ENCODE measurements at regions of chr9 and their contacts with region 1.

Region 1: DNA sequence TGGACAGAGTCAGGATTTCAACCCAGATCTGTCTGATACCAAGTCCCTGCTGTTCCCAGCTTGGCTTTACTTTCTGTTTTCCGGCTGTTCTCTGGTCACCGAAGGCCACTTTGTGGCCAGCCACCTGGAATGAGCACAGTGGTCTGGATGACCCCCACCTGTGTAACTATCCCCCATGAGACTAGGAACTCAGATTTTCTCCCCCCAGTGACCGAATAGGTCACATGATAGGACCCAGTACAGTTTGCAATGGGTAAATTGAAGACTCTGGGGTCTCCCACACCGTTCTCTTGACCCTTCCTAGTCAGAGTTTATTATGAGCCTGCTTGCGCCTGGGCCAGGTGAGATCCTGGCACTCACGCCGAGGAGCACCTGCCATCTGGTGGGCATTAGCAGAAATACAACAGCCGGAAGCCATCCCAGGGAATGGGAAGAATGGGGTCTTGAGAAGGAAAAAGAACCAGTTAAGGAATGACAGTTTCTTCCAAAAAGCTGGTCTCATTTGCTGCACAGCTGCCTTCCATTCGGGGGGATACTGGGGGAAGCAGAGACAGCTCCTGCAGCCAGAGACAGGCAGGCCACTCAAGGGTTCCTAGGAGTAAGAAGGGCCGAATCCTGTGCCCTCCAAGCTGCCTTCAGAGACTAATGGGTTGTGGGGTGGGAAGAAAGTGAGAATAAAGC is 7.1 kb downstream of the PHYHD1 start:
- DNase-seq: peak; percentile 46 to 84
- H3K4me3 ChIP-seq: no peak overlapping the region
- H3K27ac ChIP-seq: peak overlapping the region; percentile 5; the same call in 1 of the 2 replicates
- H3K4me1 ChIP-seq: no peaks in the 10 kb centered on the region; a peak in 1 of 7 replicates
- H3K27me3 ChIP-seq: no peaks in the 10 kb centered on the region
- CTCF ChIP-seq: peak; percentile 87 to 95 (median 90)
- EP300 ChIP-seq: no peak
- POLR2A ChIP-seq: no peak
- RAD21 ChIP-seq: peak; percentile 94 to 95

Region 2: DNA sequence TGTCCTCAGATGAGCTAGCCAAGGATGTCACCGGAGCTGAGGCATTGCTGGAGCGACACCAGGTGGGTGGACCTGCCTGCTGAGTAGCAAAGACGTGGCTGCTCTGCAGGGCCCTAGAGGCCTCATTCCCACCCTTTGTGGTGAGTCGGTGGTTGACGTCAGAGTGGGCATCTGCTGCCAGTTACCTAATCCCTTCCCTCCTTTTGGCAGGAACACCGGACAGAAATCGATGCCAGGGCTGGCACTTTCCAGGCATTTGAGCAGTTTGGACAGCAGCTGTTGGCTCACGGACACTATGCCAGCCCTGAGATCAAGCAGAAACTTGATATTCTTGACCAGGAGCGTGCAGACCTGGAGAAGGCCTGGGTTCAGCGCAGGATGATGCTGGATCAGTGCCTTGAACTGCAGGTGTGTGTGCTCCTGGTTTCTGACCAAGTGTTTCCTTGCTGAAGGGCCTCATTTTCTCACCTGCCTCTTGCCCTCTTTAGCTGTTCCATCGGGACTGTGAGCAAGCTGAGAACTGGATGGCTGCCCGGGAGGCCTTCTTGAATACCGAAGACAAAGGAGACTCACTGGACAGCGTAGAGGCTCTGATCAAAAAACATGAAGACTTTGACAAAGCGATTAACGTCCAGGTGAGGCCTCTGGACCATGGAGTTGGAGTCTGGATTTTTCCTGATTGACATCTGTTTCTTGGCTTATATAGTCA is 320.1 kb before region 1 on chr9:
- CTCF ChIA-PET with region 1: no interaction called
- POLR2A ChIA-PET with region 1: no interaction called
- DNase-seq: no peak
- H3K4me3 ChIP-seq: no peak overlapping the region
- H3K27ac ChIP-seq: no peak overlapping the region
- H3K4me1 ChIP-seq: no peaks in the 10 kb centered on the region
- H3K27me3 ChIP-seq: no peaks in the 10 kb centered on the region
- CTCF ChIP-seq: no peak
- EP300 ChIP-seq: no peak
- POLR2A ChIP-seq: no peak
- RAD21 ChIP-seq: no peak

Region 3: GRCh38 chr9:128845155-128845931 is 82.5 kb before region 1 on chr9:
- CTCF ChIA-PET with region 1: interaction called, 16 read pairs
- POLR2A ChIA-PET with region 1: interaction called, 3 read pairs
- DNase-seq: no peak
- H3K4me3 ChIP-seq: no peak overlapping the region
- H3K27ac ChIP-seq: no peak overlapping the region
- H3K4me1 ChIP-seq: no peaks in the 10 kb centered on the region
- H3K27me3 ChIP-seq: no peaks in the 10 kb centered on the region
- CTCF ChIP-seq: peak; percentile 32 to 44 (median 42); a peak in 3 of 4 replicates
- EP300 ChIP-seq: no peak
- POLR2A ChIP-seq: no peak
- RAD21 ChIP-seq: peak; percentile 10 to 18; a peak in 1 of 4 replicates

Region 4: DNA sequence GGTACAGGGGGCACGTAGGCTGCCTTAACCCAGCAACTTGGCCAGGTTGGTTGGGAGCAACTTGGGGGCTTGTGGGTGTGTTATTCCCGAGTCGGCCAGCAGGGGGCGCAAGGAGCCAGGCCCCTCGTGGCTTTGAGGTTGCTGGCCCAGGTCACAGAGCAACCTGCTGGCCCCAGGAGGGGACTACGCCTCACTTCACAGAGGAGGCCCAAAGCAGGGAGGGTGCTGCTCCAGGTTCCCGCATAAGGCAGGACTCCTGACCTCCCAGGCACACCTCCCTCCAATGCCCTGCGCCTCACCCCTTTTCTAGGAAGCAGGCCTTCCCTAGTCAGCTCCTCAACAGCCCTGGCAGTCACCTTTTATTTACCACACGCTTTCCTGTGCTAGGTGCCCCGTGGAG is 64.2 kb before region 1 on chr9:
- CTCF ChIA-PET with region 1: interaction called, 139 read pairs
- POLR2A ChIA-PET with region 1: interaction called, 5 read pairs
- DNase-seq: peak; percentile 87 to 99
- H3K4me3 ChIP-seq: no peak overlapping the region
- H3K27ac ChIP-seq: no peak overlapping the region; the same call in 1 of the 2 replicates
- H3K4me1 ChIP-seq: peaks cover 0 to 5% (median 2%) of the 10 kb centered on the region in 4 experiments; a peak in 4 of 7 replicates
- H3K27me3 ChIP-seq: no peaks in the 10 kb centered on the region
- CTCF ChIP-seq: peak; percentile 94 to 99 (median 99)
- EP300 ChIP-seq: no peak
- POLR2A ChIP-seq: no peak
- RAD21 ChIP-seq: peak; percentile 76 to 86

Region 5: DNA sequence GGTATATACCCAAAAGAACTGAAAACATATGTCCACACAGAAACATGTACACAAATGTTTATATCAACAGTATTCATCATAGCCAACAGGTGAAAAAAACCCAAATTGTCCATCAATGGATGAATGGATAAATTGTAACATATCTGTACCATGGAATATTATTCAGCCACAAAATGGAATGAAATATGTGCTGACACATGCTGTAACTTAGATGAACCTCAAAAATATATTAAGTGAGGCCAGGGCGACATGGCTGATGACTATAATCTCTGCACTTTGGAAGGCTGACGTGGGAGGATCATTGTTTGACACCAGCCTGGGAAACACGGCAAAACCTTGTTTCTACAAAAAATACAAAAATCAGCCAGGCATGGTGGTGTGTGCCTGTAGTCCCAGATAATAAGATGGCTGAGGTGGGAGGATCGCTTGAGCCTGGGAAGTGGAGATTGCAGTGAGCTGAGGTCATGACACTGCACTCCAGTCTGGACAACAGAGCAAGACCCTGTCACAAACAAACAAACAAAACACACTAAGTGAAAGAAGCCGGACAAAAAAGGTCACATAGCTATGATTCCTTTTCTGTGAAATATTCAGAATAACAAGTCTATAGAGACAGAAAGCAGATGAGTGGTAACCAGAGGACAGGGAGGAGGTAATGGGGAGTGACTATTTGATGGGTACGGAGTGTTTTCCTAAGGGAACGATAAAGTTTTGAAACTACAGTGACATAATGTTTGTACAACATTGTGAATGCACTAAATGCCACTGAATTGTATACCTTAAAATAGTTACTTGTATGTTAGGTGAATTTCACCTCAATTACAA is 57.5 kb before region 1 on chr9:
- CTCF ChIA-PET with region 1: interaction called, 139 read pairs
- POLR2A ChIA-PET with region 1: interaction called, 4 read pairs
- DNase-seq: no peak
- H3K4me3 ChIP-seq: no peak overlapping the region
- H3K27ac ChIP-seq: no peak overlapping the region
- H3K4me1 ChIP-seq: no peaks in the 10 kb centered on the region
- H3K27me3 ChIP-seq: no peaks in the 10 kb centered on the region
- CTCF ChIP-seq: no peak
- EP300 ChIP-seq: no peak
- POLR2A ChIP-seq: no peak
- RAD21 ChIP-seq: no peak

Region 6: DNA sequence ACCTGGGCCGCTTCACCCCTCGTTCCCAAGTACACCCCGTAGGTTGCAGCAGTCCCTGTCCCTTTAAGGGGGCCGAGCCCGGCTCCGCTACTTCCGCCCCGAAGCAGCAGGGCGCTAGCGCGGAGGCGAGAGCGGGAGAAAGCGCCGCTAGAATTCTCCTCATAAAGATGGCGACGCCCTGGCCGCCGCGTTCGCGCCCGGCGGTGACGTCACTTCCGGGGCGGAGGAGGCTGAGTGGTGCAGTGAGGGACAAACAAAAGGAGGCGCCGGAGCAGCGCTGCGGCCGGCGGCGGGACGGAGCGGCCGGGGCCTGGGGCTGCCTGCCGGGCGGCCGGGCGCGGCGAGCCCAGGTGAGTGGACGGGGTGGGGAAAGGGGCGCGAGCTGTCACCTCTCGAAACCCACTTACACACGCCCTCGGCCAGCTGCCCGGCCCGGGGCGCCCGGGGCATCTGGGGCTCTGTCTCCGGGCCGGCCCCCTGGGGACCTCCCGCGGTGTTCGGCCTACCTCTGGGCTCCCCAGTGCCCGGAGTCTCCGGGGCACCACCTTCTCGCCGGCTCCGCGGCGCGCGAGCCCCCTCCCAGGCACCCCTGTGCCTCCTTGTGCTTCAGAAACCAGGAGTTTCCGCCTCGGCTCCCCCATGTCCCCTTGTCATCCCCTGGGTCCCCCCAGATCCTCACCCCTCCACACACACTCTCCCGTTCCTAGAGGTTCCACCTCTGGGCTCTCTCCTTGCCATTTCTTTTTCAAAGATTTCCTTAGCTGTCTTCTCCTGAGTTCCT is 45.8 kb before region 1 on chr9 and contains the starts of genes KYAT1 and LRRC8A:
- CTCF ChIA-PET with region 1: interaction called, 99 read pairs
- POLR2A ChIA-PET with region 1: interaction called, 4 read pairs
- DNase-seq: peak; percentile 87 to 98
- H3K4me3 ChIP-seq: peak within 1 kb of the TSS; percentile 82 to 99 (median 96)
- H3K27ac ChIP-seq: peak within 1 kb of the TSS; percentile 84
- H3K4me1 ChIP-seq: peaks cover 3 to 19% (median 7%) of the 10 kb centered on the region in 4 experiments; a peak in 6 of 7 replicates
- H3K27me3 ChIP-seq: no peaks in the 10 kb centered on the region
- CTCF ChIP-seq: no peak
- EP300 ChIP-seq: peak in 1 of 2 experiments; percentile 54; a peak in 1 of 3 replicates
- POLR2A ChIP-seq: peak; percentile 79 to 91
- RAD21 ChIP-seq: peak in 1 of 2 experiments; percentile 0; a peak in 1 of 4 replicates
- total RNA-seq, gene KYAT1: 28.5 and 30.4 TPM in 2 replicates
- total RNA-seq, gene LRRC8A: 103 and 106 TPM in 2 replicates

Region 7: DNA sequence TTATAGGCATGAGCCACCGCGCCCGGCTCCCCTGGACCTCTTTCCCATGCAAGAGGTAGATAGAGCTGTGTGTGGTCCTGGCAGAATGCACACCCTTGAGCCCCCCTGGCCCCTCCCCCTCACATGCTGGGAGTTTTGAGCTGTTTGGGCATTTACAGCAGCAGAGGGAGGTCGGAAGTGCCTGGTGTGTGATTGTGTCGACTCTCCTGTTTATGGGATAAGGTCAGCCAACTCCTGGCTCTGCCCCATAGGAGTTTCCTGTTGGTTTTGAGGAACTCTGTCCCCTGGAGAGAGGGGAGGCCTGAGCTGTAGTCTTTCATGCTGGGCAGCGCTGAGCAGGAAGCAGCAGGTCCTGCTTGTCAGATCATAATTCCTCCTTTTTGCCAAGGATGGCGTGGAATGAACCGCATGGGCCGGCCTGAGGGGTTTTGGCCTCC is 39.9 kb before region 1 on chr9:
- CTCF ChIA-PET with region 1: interaction called, 99 read pairs
- POLR2A ChIA-PET with region 1: interaction called, 12 read pairs
- DNase-seq: peak; percentile 70 to 81
- H3K4me3 ChIP-seq: peak overlapping the region in 1 of 4 experiments; percentile 1; a peak in 1 of 8 replicates
- H3K27ac ChIP-seq: peak overlapping the region; percentile 64; the same call in 1 of the 2 replicates
- H3K4me1 ChIP-seq: peaks cover 6 to 36% (median 21%) of the 10 kb centered on the region in 4 experiments
- H3K27me3 ChIP-seq: no peaks in the 10 kb centered on the region
- CTCF ChIP-seq: no peak
- EP300 ChIP-seq: peak in 1 of 2 experiments; percentile 77; a peak in 1 of 3 replicates
- POLR2A ChIP-seq: no peak
- RAD21 ChIP-seq: peak in 1 of 2 experiments; percentile 2; a peak in 1 of 4 replicates

Region 8: GRCh38 chr9:128911529-128912035 is 16.3 kb before region 1 on chr9:
- CTCF ChIA-PET with region 1: interaction called, 26 read pairs
- POLR2A ChIA-PET with region 1: interaction called, 4 read pairs
- DNase-seq: peak in 1 of 2 experiments; percentile 64
- H3K4me3 ChIP-seq: peak overlapping the region in 1 of 4 experiments; percentile 1; a peak in 1 of 8 replicates
- H3K27ac ChIP-seq: peak overlapping the region; percentile 73; the same call in 1 of the 2 replicates
- H3K4me1 ChIP-seq: peaks cover 0 to 24% (median 18%) of the 10 kb centered on the region in 4 experiments; a peak in 6 of 7 replicates
- H3K27me3 ChIP-seq: no peaks in the 10 kb centered on the region
- CTCF ChIP-seq: no peak
- EP300 ChIP-seq: no peak
- POLR2A ChIP-seq: no peak
- RAD21 ChIP-seq: no peak

Measured in H1 (cell line).